CD8-positive, alpha-beta T cell (primary cell): ENCODE measurements at regions of chr2 and their contacts with region 1.

Region 1: GRCh38 chr2:84925724-84926376 is 20.4 kb downstream of the TMSB10 start:
- DNase-seq: peak; percentile 96 to 100 (median 98)
- ATAC-seq: peak; percentile 80
- H3K4me3 ChIP-seq: peak overlapping the region; percentile 74 to 80
- H3K4me3 Mint-ChIP-seq: peak overlapping the region; percentile 94
- H3K27ac ChIP-seq: peak overlapping the region; percentile 49 to 54
- H3K27ac Mint-ChIP-seq: peak overlapping the region; percentile 92
- H3K4me1 ChIP-seq: peaks cover 26% of the 10 kb centered on the region
- H3K4me1 Mint-ChIP-seq: peaks cover 41% of the 10 kb centered on the region
- H3K27me3 ChIP-seq: no peaks in the 10 kb centered on the region
- H3K27me3 Mint-ChIP-seq: no peaks in the 10 kb centered on the region
- CTCF ChIP-seq: peak; percentile 99

Region 2: DNA sequence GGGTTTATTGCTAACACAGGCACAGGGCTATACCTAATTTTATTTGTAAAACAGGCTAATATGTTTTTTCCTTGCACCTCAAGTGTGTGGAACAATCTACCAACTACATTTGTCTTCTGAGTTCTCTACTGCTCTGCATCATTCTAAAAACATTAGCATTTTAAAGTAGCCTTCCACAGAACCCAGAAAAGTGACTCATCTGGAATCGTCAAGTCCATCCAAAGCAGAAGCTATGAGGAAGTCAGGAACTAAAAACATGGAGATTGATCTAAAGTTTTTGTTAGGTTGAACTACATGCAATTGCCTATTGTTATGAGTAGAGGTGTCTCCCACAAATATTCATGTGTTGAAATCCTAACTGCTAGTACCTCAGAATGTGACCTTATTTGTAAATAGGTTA is 537.7 kb before region 1 on chr2:
- CTCF ChIA-PET with region 1: no interaction called
- POLR2A ChIA-PET with region 1: no interaction called
- intact Hi-C with region 1: no loop called
- DNase-seq: no peak
- ATAC-seq: no peak
- H3K4me3 ChIP-seq: no peak overlapping the region
- H3K4me3 Mint-ChIP-seq: no peak overlapping the region
- H3K27ac ChIP-seq: no peak overlapping the region
- H3K27ac Mint-ChIP-seq: no peak overlapping the region
- H3K4me1 ChIP-seq: no peaks in the 10 kb centered on the region
- H3K4me1 Mint-ChIP-seq: no peaks in the 10 kb centered on the region
- H3K27me3 ChIP-seq: peaks cover 0 to 3% of the 10 kb centered on the region in 2 experiments
- H3K27me3 Mint-ChIP-seq: peaks cover 39% of the 10 kb centered on the region
- CTCF ChIP-seq: no peak

Region 3: GRCh38 chr2:84526562-84526961 is 399.3 kb before region 1 on chr2:
- CTCF ChIA-PET with region 1: interaction called, 26 read pairs
- POLR2A ChIA-PET with region 1: no interaction called
- intact Hi-C with region 1: loop called in 1 of 2 experiments (anchors 1 kb)
- DNase-seq: peak in 2 of 9 experiments; percentile 24 to 37
- ATAC-seq: no peak
- H3K4me3 ChIP-seq: no peak overlapping the region
- H3K4me3 Mint-ChIP-seq: no peak overlapping the region
- H3K27ac ChIP-seq: no peak overlapping the region
- H3K27ac Mint-ChIP-seq: peak overlapping the region; percentile 60
- H3K4me1 ChIP-seq: peaks cover 14% of the 10 kb centered on the region
- H3K4me1 Mint-ChIP-seq: peaks cover 15% of the 10 kb centered on the region
- H3K27me3 ChIP-seq: no peaks in the 10 kb centered on the region
- H3K27me3 Mint-ChIP-seq: no peaks in the 10 kb centered on the region
- CTCF ChIP-seq: no peak

Region 4: DNA sequence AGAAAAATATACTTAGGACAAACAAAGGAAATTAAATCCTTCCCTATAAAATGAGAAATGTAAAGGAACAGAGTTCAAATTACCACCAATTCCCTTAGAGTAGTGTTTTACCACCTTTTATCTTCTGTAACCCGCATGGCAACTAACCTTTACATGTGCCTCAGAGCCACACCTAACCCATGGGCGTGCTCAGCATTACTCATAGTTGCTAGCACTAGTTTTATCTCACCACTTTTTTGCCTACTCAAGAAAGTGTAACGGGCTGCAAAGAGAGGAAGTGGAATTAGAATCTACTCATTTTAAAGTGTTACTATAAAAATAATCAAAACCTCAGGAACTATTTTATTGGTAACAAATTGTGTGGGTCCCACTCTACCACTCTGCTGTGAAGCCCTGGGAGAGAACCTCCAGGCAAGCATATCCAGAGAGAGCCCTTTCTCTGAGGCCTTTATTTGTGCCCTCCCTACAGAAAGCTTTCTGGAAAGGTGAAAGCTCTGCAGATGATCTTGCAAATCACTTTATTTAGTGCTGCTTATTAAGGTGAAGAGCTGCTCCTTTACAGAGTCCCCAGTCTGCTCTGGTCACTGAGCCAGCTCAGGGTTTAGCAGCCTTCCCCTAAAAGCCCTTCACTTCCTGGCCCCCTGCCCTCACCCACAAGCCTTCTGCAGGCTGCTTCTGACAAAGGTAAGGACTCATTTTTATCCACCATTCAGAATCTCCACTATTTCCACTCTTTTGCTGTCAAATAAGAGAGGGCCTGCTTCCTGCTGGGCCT is 143.7 kb before region 1 on chr2:
- CTCF ChIA-PET with region 1: interaction called, 7 read pairs
- POLR2A ChIA-PET with region 1: interaction called, 3 read pairs
- intact Hi-C with region 1: loop called in 1 of 2 experiments (anchors 5 kb)
- DNase-seq: peak; percentile 4 to 86 (median 64)
- ATAC-seq: peak; percentile 88
- H3K4me3 ChIP-seq: peak overlapping the region in 1 of 2 experiments; percentile 2
- H3K4me3 Mint-ChIP-seq: peak overlapping the region; percentile 39
- H3K27ac ChIP-seq: peak overlapping the region; percentile 42 to 80
- H3K27ac Mint-ChIP-seq: peak overlapping the region; percentile 89
- H3K4me1 ChIP-seq: peaks cover 69% of the 10 kb centered on the region
- H3K4me1 Mint-ChIP-seq: peaks cover 85% of the 10 kb centered on the region
- H3K27me3 ChIP-seq: no peaks in the 10 kb centered on the region
- H3K27me3 Mint-ChIP-seq: no peaks in the 10 kb centered on the region
- CTCF ChIP-seq: no peak

Region 5: DNA sequence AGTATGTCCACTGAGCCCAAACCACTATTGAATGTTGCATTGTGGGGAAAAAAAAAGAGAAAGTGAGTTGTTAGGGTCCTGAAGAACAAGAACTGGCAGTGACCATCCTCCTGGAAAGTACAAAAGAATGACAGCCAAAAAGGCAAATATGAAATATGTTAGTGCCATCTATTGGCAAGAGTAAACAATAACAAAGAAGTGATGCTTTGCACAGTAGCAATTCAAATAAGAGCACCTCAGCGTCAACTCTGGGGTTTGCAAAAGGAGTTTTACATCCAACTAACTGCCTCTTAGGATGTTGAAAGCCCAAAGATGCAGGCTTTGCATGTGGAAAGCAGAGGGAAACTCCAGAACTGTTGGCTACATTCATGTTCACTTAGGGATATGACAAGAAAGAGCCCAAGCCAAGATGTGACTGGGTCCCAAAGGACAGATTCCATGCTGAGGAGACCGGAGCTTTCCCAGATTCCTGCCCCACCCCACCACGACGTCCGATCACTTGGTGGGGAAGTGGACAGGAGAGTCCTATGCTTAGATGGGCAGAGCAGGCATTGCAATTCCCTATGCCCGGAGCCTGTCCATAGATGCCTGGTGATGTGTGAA is 60.6 kb before region 1 on chr2:
- CTCF ChIA-PET with region 1: interaction called, 28 read pairs
- POLR2A ChIA-PET with region 1: interaction called, 11 read pairs
- intact Hi-C with region 1: loop called in 1 of 2 experiments (anchors 1 kb)
- DNase-seq: peak in 3 of 9 experiments; percentile 49 to 73 (median 60)
- ATAC-seq: peak; percentile 57
- H3K4me3 ChIP-seq: no peak overlapping the region
- H3K4me3 Mint-ChIP-seq: peak overlapping the region; percentile 61
- H3K27ac ChIP-seq: no peak overlapping the region
- H3K27ac Mint-ChIP-seq: peak overlapping the region; percentile 91
- H3K4me1 ChIP-seq: peaks cover 80% of the 10 kb centered on the region
- H3K4me1 Mint-ChIP-seq: peaks cover 85% of the 10 kb centered on the region
- H3K27me3 ChIP-seq: no peaks in the 10 kb centered on the region
- H3K27me3 Mint-ChIP-seq: no peaks in the 10 kb centered on the region
- CTCF ChIP-seq: peak; percentile 72

Region 6: GRCh38 chr2:84894758-84895520 is 30.9 kb before region 1 on chr2:
- CTCF ChIA-PET with region 1: interaction called, 278 read pairs
- POLR2A ChIA-PET with region 1: interaction called, 5 read pairs
- intact Hi-C with region 1: no loop called
- DNase-seq: peak in 3 of 9 experiments; percentile 41 to 68 (median 61)
- ATAC-seq: peak; percentile 60
- H3K4me3 ChIP-seq: peak overlapping the region; percentile 18 to 28
- H3K4me3 Mint-ChIP-seq: peak overlapping the region; percentile 44
- H3K27ac ChIP-seq: peak overlapping the region; percentile 41 to 79
- H3K27ac Mint-ChIP-seq: peak overlapping the region; percentile 95
- H3K4me1 ChIP-seq: peaks cover 55% of the 10 kb centered on the region
- H3K4me1 Mint-ChIP-seq: peaks cover 65% of the 10 kb centered on the region
- H3K27me3 ChIP-seq: no peaks in the 10 kb centered on the region
- H3K27me3 Mint-ChIP-seq: no peaks in the 10 kb centered on the region
- CTCF ChIP-seq: no peak

Region 7: DNA sequence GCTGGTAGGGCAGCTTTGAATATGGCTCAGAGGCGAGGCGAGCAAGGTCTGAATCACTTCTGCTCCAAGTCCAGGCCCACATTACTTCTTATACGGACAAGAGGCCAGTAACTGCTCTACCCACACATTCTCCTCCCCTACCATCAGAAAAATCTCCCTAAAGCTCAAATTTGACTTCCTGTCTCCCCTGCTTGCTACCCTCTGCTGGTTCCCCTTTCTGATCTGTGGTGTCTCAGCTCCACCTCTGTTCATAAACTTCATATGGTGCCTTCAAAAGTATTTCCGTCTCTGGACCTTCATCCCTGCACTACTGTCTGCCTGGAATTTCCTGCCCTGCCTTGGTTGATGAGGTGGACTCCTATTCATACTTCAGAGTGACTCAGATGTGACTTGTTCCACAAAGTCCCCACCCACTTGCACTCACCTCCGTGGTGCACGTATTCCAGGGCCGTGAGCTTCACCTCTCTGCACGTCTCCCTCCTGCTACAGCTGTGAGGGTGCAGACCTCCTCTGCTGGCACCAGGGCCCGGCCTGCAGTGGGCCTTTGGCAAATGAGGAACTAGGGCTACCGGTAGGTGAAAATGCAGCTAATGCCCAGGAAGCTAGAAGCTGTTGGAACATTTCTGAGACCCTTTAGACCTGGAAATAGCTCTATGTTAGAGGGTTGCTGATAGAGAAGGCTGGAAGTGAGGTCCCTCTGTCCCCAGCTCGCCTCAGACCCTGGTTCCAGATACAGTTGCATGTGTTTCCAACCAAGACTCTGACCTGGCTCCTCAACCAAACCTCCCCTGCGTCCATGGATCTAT is 20.6 kb after region 1 on chr2:
- CTCF ChIA-PET with region 1: interaction called, 31 read pairs
- POLR2A ChIA-PET with region 1: interaction called, 14 read pairs
- intact Hi-C with region 1: loop called in 1 of 2 experiments (anchors 2 kb)
- DNase-seq: peak in 8 of 9 experiments; percentile 30 to 81 (median 62)
- ATAC-seq: peak; percentile 87
- H3K4me3 ChIP-seq: peak overlapping the region; percentile 20 to 27
- H3K4me3 Mint-ChIP-seq: peak overlapping the region; percentile 75
- H3K27ac ChIP-seq: peak overlapping the region; percentile 1 to 76
- H3K27ac Mint-ChIP-seq: peak overlapping the region; percentile 90
- H3K4me1 ChIP-seq: peaks cover 22% of the 10 kb centered on the region
- H3K4me1 Mint-ChIP-seq: peaks cover 24% of the 10 kb centered on the region
- H3K27me3 ChIP-seq: no peaks in the 10 kb centered on the region
- H3K27me3 Mint-ChIP-seq: no peaks in the 10 kb centered on the region
- CTCF ChIP-seq: no peak

Region 8: GRCh38 chr2:85288244-85288725 is 362.4 kb after region 1 on chr2:
- CTCF ChIA-PET with region 1: interaction called, 9 read pairs
- POLR2A ChIA-PET with region 1: no interaction called
- intact Hi-C with region 1: loop called (anchors 5 to 10 kb)
- DNase-seq: no peak
- ATAC-seq: no peak
- H3K4me3 ChIP-seq: no peak overlapping the region
- H3K4me3 Mint-ChIP-seq: no peak overlapping the region
- H3K27ac ChIP-seq: no peak overlapping the region
- H3K27ac Mint-ChIP-seq: no peak overlapping the region
- H3K4me1 ChIP-seq: peaks cover 15% of the 10 kb centered on the region
- H3K4me1 Mint-ChIP-seq: peaks cover 23% of the 10 kb centered on the region
- H3K27me3 ChIP-seq: no peaks in the 10 kb centered on the region
- H3K27me3 Mint-ChIP-seq: no peaks in the 10 kb centered on the region
- CTCF ChIP-seq: no peak